IMR-90 (cell line): ENCODE measurements at regions of chr2 and their contacts with region 1.

Region 1: DNA sequence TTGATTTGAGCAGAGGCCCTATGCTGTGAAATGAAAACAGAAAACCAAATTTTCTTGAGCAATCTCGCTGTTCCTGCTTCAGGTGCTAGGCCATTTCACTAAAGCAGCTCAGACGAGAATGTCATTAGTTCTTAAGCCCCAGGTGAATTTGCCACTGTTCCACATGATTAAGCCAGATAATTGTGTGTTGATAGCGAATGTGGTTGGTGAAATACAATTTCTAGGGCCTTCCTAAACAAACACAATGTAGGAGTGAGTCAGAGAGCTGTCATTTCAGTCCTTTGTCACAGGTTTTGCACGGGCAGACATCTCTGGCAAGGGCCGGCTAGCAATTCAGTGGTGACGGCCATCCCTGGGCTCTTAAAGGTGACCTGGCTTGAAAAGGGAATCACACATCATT is 170.6 kb downstream of the TMEM182 start:
- DNase-seq: no peak
- ATAC-seq: no peak
- H3K4me3 ChIP-seq: no peak overlapping the region
- H3K27ac ChIP-seq: no peak overlapping the region
- H3K4me1 ChIP-seq: no peaks in the 10 kb centered on the region
- H3K27me3 ChIP-seq: no peaks in the 10 kb centered on the region
- CTCF ChIP-seq: no peak
- POLR2A ChIP-seq: no peak
- RAD21 ChIP-seq: no peak

Region 2: GRCh38 chr2:101751875-101752619 is 1180.4 kb before region 1 on chr2:
- CTCF ChIA-PET with region 1: no interaction called
- POLR2A ChIA-PET with region 1: no interaction called
- dilution Hi-C with region 1: no loop called
- in situ Hi-C with region 1: no loop called
- intact Hi-C with region 1: no loop called
- DNase-seq: no peak
- ATAC-seq: no peak
- H3K4me3 ChIP-seq: no peak overlapping the region
- H3K27ac ChIP-seq: no peak overlapping the region
- H3K4me1 ChIP-seq: peaks cover 30% of the 10 kb centered on the region
- H3K27me3 ChIP-seq: no peaks in the 10 kb centered on the region
- CTCF ChIP-seq: no peak
- POLR2A ChIP-seq: no peak
- RAD21 ChIP-seq: no peak

Region 3: DNA sequence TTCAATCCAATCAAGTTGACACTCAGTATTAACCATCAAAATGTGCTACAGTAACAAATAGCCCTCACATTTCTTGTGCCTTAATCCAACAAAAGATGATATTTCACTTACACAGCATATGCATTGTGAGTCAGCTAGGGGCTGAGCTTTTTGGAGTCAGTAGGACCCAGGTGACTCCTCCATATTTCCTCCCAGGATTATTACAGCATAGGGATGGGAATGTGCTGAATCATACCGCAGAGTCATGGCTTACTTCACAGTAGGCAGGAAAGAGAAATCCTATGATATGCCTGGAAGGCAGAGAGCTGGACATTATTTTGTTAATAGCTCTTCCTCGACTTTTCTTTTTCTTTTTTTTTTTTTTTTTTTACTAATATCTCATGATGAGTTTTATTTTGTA is 17.3 kb before region 1 on chr2:
- CTCF ChIA-PET with region 1: no interaction called
- POLR2A ChIA-PET with region 1: no interaction called
- dilution Hi-C with region 1: no loop called
- in situ Hi-C with region 1: no loop called
- intact Hi-C with region 1: no loop called
- DNase-seq: peak; percentile 45
- ATAC-seq: no peak
- H3K4me3 ChIP-seq: no peak overlapping the region
- H3K27ac ChIP-seq: no peak overlapping the region
- H3K4me1 ChIP-seq: no peaks in the 10 kb centered on the region
- H3K27me3 ChIP-seq: no peaks in the 10 kb centered on the region
- CTCF ChIP-seq: no peak
- POLR2A ChIP-seq: no peak
- RAD21 ChIP-seq: no peak

Region 4: GRCh38 chr2:102999958-103000357 is 67.5 kb after region 1 on chr2:
- CTCF ChIA-PET with region 1: no interaction called
- POLR2A ChIA-PET with region 1: no interaction called
- dilution Hi-C with region 1: no loop called
- in situ Hi-C with region 1: no loop called
- intact Hi-C with region 1: loop called (anchors 10 kb)
- DNase-seq: no peak
- ATAC-seq: no peak
- H3K4me3 ChIP-seq: no peak overlapping the region
- H3K27ac ChIP-seq: no peak overlapping the region
- H3K4me1 ChIP-seq: no peaks in the 10 kb centered on the region
- H3K27me3 ChIP-seq: no peaks in the 10 kb centered on the region
- CTCF ChIP-seq: no peak
- POLR2A ChIP-seq: no peak
- RAD21 ChIP-seq: no peak